ENCODE measurements at regions of chr5 and their contacts with region 1.

Region 1: DNA sequence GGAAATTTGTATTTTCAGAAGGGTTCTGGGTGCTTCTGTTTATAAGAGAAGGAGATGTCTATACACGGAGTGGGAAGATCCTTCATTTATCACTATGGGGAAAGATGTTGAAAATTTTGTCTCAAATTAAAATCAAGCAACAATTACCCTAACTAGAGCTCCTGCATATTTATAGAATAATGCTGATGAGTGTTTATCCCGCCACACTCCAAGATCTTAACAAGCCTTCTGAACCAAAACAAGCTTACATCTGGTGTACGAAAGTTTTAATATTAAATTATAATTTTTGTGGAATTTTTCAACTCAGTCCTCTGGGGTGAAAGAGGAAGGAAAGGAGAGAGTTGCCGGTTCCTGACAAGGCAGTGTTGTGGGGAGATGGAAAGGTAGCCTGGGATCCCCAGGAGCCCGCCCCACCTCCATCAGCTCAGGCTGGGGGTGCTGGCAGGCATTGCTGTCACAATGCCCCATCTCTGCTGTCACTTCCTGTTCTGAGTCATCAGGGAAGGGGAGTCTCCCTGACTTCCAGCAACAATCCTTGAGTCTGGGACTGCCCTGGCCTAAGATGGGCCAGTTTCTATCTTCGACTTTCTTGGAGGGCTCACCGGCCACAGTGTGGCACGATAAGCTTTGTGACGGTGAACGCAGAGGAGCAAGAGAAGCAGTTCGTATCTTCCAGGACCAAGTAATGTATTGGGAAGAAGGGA is 64.5 kb downstream of the ERAP1 start:
- DNase-seq: no peak
- H3K4me3 ChIP-seq: no peak overlapping the region
- H3K27ac ChIP-seq: no peak overlapping the region
- H3K4me1 ChIP-seq: no peaks in the 10 kb centered on the region
- H3K27me3 ChIP-seq: no peaks in the 10 kb centered on the region
- CTCF ChIP-seq: no peak
- POLR2A ChIP-seq: no peak

Region 2: DNA sequence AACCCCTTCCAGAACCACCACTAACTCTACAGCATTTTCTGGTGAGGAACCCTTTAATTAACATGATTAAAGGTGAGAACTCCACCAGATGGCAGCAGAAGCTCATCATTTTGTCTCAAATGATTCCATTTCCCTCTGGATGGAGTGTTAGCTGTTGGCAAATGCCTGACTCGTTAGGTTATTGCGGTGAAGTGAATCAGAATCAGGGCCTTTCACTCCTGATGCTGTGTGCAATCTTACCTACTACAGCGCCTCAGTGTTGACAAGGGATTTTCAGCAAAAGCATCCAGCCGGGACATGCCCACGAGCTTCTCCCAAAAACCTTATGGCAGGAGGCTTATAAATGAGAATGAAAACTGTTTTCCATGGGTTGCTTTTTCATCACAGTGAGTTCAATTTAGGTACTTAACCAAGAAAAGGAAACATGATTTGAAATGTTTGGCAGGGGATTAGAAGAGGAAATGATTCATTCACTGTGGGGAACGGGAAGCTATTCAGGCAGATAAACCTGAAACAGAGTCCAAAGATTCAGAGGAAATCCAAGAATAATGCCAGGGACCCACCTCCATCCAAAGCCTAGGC is 129.0 kb before region 1 on chr5:
- intact Hi-C with region 1: loop called (anchors 10 kb)
- DNase-seq: peak; percentile 72
- H3K4me3 ChIP-seq: no peak overlapping the region
- H3K27ac ChIP-seq: peak overlapping the region in 1 of 2 donors; percentile 15
- H3K4me1 ChIP-seq: no peaks in the 10 kb centered on the region
- H3K27me3 ChIP-seq: no peaks in the 10 kb centered on the region
- CTCF ChIP-seq: peak; percentile 31 to 83 (median 70)
- POLR2A ChIP-seq: no peak

Region 3: DNA sequence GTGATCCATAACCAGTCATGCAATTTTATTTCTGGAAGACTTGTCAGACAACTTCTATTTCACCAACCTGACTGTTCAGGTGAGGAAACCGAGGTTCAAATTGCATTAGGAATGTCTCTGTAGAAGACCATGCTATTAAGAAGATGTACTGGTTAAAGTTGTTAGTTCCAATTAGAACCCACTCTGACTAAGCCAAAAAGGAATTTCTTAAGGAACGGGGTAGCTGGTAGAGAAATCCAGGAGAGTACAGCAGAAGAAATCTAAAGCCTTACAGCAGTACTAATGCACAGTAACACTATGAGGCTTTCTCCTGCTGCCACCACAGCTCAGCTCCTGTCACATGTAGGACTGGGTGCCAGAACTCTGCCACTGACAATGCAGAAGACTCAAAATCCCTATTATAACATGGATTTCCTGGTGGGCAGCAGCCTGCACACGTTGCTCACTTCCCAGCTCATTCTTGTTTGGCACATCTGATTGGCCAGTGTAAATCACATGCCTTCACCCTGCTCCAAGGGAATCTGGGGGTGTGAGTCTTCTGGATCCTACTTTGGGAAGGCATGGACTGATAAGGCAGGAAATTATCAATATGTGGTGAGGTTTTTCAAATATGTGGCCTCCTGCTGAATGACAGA is 43.9 kb before region 1 on chr5:
- intact Hi-C with region 1: no loop called
- DNase-seq: no peak
- H3K4me3 ChIP-seq: no peak overlapping the region
- H3K27ac ChIP-seq: no peak overlapping the region
- H3K4me1 ChIP-seq: no peaks in the 10 kb centered on the region
- H3K27me3 ChIP-seq: no peaks in the 10 kb centered on the region
- CTCF ChIP-seq: no peak
- POLR2A ChIP-seq: no peak